T-cell (primary cell): ENCODE measurements at regions of chr1 and their contacts with region 1.

Region 1: GRCh38 chr1:101112051-101112780 is 86.6 kb upstream of the DPH5 start:
- DNase-seq: peak; percentile 35 to 92 (median 80)
- ATAC-seq: peak; percentile 92 to 96 (median 96)
- H3K4me3 ChIP-seq: no peak overlapping the region
- H3K4me3 Mint-ChIP-seq: peak overlapping the region; percentile 60 to 73 (median 71)
- H3K27ac ChIP-seq: peak overlapping the region; percentile 85
- H3K27ac Mint-ChIP-seq: peak overlapping the region; percentile 95 to 98
- H3K4me1 ChIP-seq: peaks cover 26 to 42% of the 10 kb centered on the region in 2 experiments
- H3K4me1 Mint-ChIP-seq: peaks cover 64 to 76% (median 70%) of the 10 kb centered on the region in 3 donors
- H3K27me3 ChIP-seq: no peaks in the 10 kb centered on the region
- H3K27me3 Mint-ChIP-seq: no peaks in the 10 kb centered on the region

Region 2: DNA sequence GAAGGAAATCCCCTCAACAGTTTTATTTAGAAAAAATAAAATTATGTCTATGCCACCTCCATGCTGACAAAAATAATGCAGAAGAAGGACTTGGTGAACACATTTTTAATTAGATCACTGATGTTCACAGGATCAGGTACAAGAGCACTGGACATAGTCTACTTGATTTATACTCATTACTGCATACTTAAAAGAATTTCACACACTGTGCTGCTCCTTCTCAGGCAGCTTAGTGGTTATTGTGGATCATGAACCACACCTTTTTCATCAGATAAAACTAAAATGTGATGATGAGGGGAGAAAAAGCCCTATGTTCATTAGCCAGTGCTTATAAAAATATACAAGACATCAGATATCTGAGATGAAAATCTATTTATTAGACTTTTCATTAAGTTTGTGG is 16.6 kb after region 1 on chr1:
- CTCF ChIA-PET with region 1: interaction called, 3 read pairs
- POLR2A ChIA-PET with region 1: interaction called, 9 to 10 read pairs
- DNase-seq: peak in 1 of 35 experiments; percentile 52
- ATAC-seq: peak; percentile 14 to 45 (median 30)
- H3K4me3 ChIP-seq: no peak overlapping the region
- H3K4me3 Mint-ChIP-seq: peak overlapping the region in 2 of 3 donors; percentile 51 to 73
- H3K27ac ChIP-seq: peak overlapping the region; percentile 74
- H3K27ac Mint-ChIP-seq: peak overlapping the region; percentile 95 to 97
- H3K4me1 ChIP-seq: peaks cover 15 to 50% of the 10 kb centered on the region in 2 experiments
- H3K4me1 Mint-ChIP-seq: peaks cover 60 to 73% (median 71%) of the 10 kb centered on the region in 3 donors
- H3K27me3 ChIP-seq: no peaks in the 10 kb centered on the region
- H3K27me3 Mint-ChIP-seq: no peaks in the 10 kb centered on the region